ENCODE measurements at regions of chr1 and their contacts with region 1.

Region 1: GRCh38 chr1:160575112-160575664 is 4.1 kb downstream of the CD84 start:
- DNase-seq: no peak
- H3K4me3 Mint-ChIP-seq: peak overlapping the region; percentile 51
- H3K27ac Mint-ChIP-seq: peak overlapping the region; percentile 93
- H3K4me1 Mint-ChIP-seq: peaks cover 87% of the 10 kb centered on the region
- H3K27me3 Mint-ChIP-seq: no peaks in the 10 kb centered on the region

Region 2: GRCh38 chr1:159979257-159979656 is 595.9 kb before region 1 on chr1:
- intact Hi-C with region 1: no loop called
- DNase-seq: no peak
- H3K4me3 Mint-ChIP-seq: no peak overlapping the region
- H3K27ac Mint-ChIP-seq: no peak overlapping the region
- H3K4me1 Mint-ChIP-seq: no peaks in the 10 kb centered on the region
- H3K27me3 Mint-ChIP-seq: peaks cover 38% of the 10 kb centered on the region

Region 3: DNA sequence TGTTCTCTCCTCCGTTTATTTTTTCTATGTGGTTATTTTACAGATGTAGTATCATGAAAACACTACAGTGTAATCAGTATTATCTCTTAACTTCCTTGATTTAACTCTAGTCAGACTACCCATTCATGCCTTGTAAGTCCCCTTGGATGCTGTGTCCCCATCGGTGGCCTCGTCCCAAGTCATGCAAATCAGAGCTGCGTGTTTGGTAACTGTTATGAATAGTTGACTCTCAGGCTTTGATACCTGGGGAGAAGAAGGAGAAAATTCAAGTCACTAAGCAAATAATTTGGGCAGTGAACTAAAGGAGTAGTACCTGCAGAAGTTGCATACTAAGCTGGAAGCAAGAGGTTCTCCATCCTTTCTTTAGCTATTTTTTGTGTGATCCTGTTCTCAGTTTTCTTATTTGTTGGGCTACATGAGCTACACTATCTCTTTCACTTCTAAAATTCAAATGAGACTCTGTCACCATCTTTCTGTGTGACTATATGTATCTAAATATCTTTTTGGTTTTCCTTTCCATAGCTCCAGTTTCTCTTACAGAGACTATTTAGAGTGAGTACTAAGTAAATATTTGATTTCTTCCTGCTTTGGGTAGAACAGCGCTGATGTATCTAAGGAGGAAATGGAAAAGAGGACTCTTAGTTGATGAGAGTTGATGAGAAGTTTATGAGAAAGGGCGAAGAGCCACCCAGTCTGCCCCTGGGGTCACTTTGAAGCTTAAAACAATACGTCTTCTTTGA is 123.9 kb before region 1 on chr1:
- intact Hi-C with region 1: no loop called
- DNase-seq: no peak
- H3K4me3 Mint-ChIP-seq: peak overlapping the region; percentile 10
- H3K27ac Mint-ChIP-seq: peak overlapping the region; percentile 70
- H3K4me1 Mint-ChIP-seq: peaks cover 52% of the 10 kb centered on the region
- H3K27me3 Mint-ChIP-seq: no peaks in the 10 kb centered on the region

Region 4: DNA sequence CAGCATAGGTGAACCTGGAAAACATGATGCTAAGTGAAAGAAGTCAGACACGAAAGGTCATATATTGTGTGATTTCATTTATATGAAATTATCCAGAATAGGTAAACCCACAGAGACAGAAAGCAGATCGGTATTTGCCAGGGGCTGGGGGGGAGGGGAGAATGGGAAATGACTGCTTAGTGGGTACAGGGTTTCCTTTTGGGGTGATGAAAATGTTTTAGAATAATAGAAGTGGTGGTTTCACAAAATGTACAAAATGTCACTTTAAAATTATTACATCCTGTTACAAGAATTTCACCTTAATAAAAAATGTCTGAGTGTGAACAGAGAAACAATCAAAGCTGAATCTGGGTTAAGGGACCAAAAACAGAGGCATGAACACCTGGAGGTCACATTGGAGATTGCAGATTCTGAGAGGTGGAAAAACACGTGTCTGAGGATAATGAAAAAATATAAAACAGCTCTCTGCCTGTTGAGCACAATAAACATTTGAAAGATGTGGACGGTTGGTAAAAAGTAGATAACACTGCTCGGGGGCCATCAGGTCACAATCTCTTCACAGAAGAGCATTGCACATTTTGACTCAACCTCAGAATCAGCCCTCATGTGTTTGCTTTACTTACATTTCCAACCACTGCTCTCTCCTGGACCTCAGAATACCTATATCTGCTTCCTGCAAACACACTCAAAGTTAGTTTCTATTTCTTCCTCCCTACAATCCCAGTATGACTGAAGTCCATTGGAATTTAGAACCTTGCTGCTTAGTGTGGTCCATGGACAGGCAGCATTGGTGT is 55.3 kb before region 1 on chr1:
- intact Hi-C with region 1: loop called (anchors 2 kb)
- DNase-seq: peak; percentile 31
- H3K4me3 Mint-ChIP-seq: peak overlapping the region; percentile 85
- H3K27ac Mint-ChIP-seq: peak overlapping the region; percentile 97
- H3K4me1 Mint-ChIP-seq: peaks cover 69% of the 10 kb centered on the region
- H3K27me3 Mint-ChIP-seq: no peaks in the 10 kb centered on the region

Region 5: DNA sequence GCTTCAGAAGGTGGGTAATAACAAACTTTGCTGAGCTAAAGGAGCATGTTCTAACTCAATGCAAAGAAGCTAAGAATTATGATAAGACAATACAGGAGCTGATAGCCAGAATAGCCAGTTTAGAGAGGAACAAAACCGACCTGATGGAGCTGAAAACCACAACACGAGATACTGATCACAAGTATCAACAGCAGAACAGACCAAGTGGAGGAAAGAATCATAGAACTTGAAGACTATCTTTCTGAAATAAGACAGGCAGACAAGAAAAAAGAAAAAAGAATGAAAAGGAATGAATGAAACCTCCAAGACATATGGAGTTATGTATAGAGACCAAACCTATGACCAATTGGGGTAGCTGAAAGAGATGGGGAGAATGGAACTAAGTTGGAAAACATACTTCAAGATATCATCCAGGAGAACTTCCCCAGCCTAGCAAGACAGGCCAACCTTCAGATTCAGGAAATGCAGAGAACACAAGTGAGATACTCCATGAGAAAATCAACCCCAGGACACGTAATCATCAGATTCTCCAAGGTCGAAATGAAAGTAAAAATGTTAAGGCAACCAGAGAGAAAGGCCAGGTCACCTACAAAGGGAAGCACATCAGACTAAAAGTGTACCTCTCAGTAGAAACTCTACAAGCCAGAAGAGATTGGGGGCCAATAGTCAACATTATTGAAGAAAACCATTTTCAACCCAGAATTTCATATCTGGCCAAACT is 16.4 kb before region 1 on chr1:
- intact Hi-C with region 1: loop called (anchors 1 kb)
- DNase-seq: no peak
- H3K4me3 Mint-ChIP-seq: peak overlapping the region; percentile 73
- H3K27ac Mint-ChIP-seq: peak overlapping the region; percentile 80
- H3K4me1 Mint-ChIP-seq: peaks cover 46% of the 10 kb centered on the region
- H3K27me3 Mint-ChIP-seq: no peaks in the 10 kb centered on the region

Region 6: GRCh38 chr1:160639652-160640051 is 64.5 kb after region 1 on chr1:
- intact Hi-C with region 1: loop called (anchors 5 kb)
- DNase-seq: no peak
- H3K4me3 Mint-ChIP-seq: peak overlapping the region; percentile 71
- H3K27ac Mint-ChIP-seq: peak overlapping the region; percentile 94
- H3K4me1 Mint-ChIP-seq: peaks cover 84% of the 10 kb centered on the region
- H3K27me3 Mint-ChIP-seq: no peaks in the 10 kb centered on the region